ENCODE measurements at regions of chrX and their contacts with region 1.

Region 1: DNA sequence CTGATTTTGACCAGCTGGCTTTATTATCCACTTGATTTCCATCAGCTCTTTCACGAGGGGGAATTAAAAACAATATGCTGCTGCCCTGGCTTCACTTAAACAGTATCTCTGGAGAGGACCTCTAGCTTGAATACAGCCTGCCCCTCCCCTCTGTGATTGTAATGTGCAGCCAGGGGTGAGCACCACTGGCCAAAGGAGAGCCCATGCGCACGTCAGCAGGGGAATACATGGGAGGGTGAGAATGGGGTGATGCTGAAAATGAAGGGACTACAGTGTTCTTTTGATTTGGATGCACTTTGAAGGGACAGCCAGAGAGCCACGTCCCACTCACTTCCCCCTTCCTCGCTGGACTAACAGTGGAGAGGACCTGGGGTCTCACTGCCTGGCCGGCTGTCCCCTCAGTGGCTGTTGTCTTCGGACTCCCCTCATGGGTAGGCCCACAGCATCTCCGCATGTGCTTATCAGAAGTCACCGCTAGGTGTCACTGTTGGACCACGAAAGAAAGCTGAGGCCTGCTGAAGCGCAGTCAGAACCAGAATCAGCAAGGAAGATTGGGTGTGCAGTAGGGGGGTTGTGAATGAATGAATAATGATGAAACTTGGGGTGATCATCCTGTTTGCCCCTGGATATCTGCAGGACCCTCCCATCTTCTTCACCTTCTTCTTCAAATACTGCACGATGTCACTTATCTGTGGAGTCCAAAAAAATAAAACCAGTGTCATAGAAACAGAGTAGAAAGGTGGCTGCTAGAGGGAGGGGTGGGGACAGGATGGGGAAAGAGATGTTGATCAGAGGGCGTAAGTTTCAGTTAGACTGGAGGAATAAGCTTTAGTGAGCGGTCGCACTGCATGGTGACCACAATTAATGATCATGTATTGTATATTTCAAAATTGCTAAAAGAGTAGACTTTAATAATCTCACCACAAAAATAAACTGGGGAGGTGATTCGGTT is 32.8 kb downstream of the CLCN4 start:
- DNase-seq: peak; percentile 75
- H3K4me3 Mint-ChIP-seq: no peak overlapping the region
- H3K27ac Mint-ChIP-seq: no peak overlapping the region
- H3K4me1 Mint-ChIP-seq: peaks cover 2% of the 10 kb centered on the region
- H3K27me3 Mint-ChIP-seq: no peaks in the 10 kb centered on the region

Region 2: DNA sequence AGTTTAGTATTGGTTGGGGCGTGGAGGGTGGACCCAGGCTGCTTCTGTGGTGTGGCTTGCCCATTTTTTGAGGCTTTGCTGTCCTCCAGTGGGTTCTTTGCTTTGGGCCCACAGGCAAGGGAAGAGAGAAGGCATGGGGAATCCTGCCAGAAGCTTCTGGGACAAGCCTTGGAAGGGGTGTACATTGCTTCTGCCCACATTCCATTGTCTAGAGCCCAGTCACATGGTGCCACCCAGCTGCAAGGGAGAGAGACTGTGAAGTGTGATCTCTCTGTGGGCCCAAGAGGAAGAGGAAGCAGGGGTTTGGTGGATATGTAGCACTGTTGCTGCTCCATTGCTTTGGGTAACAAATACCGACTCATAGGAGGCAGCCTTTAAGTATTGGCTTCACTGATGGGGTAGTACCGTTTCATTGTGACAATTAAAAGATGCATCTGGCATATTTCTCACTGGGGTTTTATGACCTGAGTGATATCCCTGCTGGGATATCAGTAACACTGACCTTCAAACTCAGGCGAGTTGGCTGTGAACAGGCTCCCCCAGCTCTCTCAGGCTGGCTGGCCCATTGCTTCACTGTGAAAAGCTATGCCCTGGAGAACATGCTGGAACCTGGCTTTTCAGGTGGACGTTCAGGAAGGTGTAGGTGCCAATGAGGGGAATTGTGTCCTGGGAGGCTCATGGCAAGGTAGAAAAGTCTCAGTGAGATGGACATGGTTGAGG is 136.5 kb before region 1 on chrX:
- CTCF ChIA-PET with region 1: no interaction called
- POLR2A ChIA-PET with region 1: no interaction called
- intact Hi-C with region 1: no loop called
- DNase-seq: no peak
- H3K4me3 Mint-ChIP-seq: no peak overlapping the region
- H3K27ac Mint-ChIP-seq: no peak overlapping the region
- H3K4me1 Mint-ChIP-seq: peaks cover 13% of the 10 kb centered on the region
- H3K27me3 Mint-ChIP-seq: no peaks in the 10 kb centered on the region

Region 3: GRCh38 chrX:10615931-10616775 is 426.6 kb after region 1 on chrX:
- CTCF ChIA-PET with region 1: interaction called, 6 read pairs
- POLR2A ChIA-PET with region 1: no interaction called
- intact Hi-C with region 1: loop called (anchors 2 kb)
- DNase-seq: no peak
- H3K4me3 Mint-ChIP-seq: no peak overlapping the region
- H3K27ac Mint-ChIP-seq: no peak overlapping the region
- H3K4me1 Mint-ChIP-seq: peaks cover 4% of the 10 kb centered on the region
- H3K27me3 Mint-ChIP-seq: peaks cover 21% of the 10 kb centered on the region

Region 4: DNA sequence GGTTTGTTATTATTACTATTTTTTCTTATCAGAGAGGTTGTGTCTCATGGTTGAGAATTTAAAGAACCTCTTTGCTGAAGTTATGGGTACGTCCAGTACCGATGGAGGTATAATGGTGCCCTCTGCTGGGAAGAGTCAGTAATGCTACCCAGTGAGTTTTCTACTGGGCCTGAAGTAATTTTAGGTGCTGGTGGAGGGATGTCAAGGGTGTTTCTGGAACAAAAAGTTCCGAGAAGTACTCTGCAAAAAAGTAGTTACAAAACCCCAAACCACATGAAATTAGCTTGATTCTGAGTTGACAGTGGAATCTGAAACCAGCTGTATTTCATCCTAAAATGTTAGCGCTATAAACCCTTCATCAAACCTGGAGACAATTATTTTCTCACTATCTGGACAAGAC is 533.3 kb after region 1 on chrX:
- CTCF ChIA-PET with region 1: interaction called, 38 read pairs
- POLR2A ChIA-PET with region 1: no interaction called
- intact Hi-C with region 1: loop called (anchors 1 kb)
- DNase-seq: peak; percentile 17
- H3K4me3 Mint-ChIP-seq: no peak overlapping the region
- H3K27ac Mint-ChIP-seq: no peak overlapping the region
- H3K4me1 Mint-ChIP-seq: no peaks in the 10 kb centered on the region
- H3K27me3 Mint-ChIP-seq: no peaks in the 10 kb centered on the region

Region 5: GRCh38 chrX:10769195-10769594 is 579.6 kb after region 1 on chrX:
- CTCF ChIA-PET with region 1: interaction called, 3 read pairs
- POLR2A ChIA-PET with region 1: no interaction called
- intact Hi-C with region 1: loop called (anchors 1 kb)
- DNase-seq: no peak
- H3K4me3 Mint-ChIP-seq: no peak overlapping the region
- H3K27ac Mint-ChIP-seq: no peak overlapping the region
- H3K4me1 Mint-ChIP-seq: no peaks in the 10 kb centered on the region
- H3K27me3 Mint-ChIP-seq: no peaks in the 10 kb centered on the region

Region 6: DNA sequence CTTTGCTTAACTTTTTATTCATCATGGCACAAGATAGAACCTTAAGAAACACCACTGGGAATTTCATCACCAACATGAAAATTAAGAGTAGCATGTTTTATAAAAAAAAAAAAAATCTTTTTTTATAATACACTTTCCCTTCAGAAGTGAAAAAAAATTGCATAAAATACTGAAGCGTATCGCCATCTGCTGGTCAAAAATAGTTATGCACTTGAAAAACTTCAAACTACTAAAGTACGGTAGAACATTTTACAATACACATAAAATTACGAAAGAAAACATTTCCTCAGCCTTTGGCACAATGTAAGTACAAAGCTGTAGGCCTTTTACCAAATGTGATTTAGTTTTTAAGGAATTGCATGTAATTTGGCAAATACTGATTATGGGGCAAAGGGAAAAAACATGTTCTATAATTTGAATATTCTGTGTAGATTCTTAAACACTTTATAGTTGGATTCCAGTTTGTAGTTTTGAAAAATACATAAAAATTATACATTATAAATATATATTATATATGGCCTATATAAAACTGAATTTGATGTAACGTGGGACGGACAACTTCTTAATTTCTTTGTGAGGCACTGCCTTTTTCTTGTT is 948.0 kb after region 1 on chrX:
- CTCF ChIA-PET with region 1: interaction called, 29 read pairs
- POLR2A ChIA-PET with region 1: no interaction called
- intact Hi-C with region 1: loop called (anchors 2 kb)
- DNase-seq: no peak
- H3K4me3 Mint-ChIP-seq: no peak overlapping the region
- H3K27ac Mint-ChIP-seq: no peak overlapping the region
- H3K4me1 Mint-ChIP-seq: no peaks in the 10 kb centered on the region
- H3K27me3 Mint-ChIP-seq: peaks cover 4% of the 10 kb centered on the region